Activated naive CD4-positive, alpha-beta T cell treated with anti-CD3 and anti-CD28 coated beads for 36 hours (primary cell): ENCODE measurements at regions of chr19 and their contacts with region 1.

Region 1: GRCh38 chr19:14786421-14786851 is 8.1 kb upstream of the ADGRE2 start:
- DNase-seq: peak; percentile 32
- H3K4me3 Mint-ChIP-seq: no peak overlapping the region
- H3K27ac Mint-ChIP-seq: no peak overlapping the region
- H3K4me1 Mint-ChIP-seq: peaks cover 15% of the 10 kb centered on the region
- H3K27me3 Mint-ChIP-seq: peaks cover 15% of the 10 kb centered on the region

Region 2: GRCh38 chr19:14775869-14776586 is 10.4 kb before region 1 on chr19:
- CTCF ChIA-PET with region 1: interaction called, 12 read pairs
- intact Hi-C with region 1: no loop called
- DNase-seq: no peak
- H3K4me3 Mint-ChIP-seq: no peak overlapping the region
- H3K27ac Mint-ChIP-seq: no peak overlapping the region
- H3K4me1 Mint-ChIP-seq: peaks cover 7% of the 10 kb centered on the region
- H3K27me3 Mint-ChIP-seq: peaks cover 26% of the 10 kb centered on the region

Region 3: GRCh38 chr19:14890643-14891379 is 104.4 kb after region 1 on chr19:
- CTCF ChIA-PET with region 1: interaction called, 3 read pairs
- intact Hi-C with region 1: loop called (anchors 2 kb)
- DNase-seq: no peak
- H3K4me3 Mint-ChIP-seq: no peak overlapping the region
- H3K27ac Mint-ChIP-seq: no peak overlapping the region
- H3K4me1 Mint-ChIP-seq: peaks cover 8% of the 10 kb centered on the region
- H3K27me3 Mint-ChIP-seq: peaks cover 31% of the 10 kb centered on the region

Region 4: DNA sequence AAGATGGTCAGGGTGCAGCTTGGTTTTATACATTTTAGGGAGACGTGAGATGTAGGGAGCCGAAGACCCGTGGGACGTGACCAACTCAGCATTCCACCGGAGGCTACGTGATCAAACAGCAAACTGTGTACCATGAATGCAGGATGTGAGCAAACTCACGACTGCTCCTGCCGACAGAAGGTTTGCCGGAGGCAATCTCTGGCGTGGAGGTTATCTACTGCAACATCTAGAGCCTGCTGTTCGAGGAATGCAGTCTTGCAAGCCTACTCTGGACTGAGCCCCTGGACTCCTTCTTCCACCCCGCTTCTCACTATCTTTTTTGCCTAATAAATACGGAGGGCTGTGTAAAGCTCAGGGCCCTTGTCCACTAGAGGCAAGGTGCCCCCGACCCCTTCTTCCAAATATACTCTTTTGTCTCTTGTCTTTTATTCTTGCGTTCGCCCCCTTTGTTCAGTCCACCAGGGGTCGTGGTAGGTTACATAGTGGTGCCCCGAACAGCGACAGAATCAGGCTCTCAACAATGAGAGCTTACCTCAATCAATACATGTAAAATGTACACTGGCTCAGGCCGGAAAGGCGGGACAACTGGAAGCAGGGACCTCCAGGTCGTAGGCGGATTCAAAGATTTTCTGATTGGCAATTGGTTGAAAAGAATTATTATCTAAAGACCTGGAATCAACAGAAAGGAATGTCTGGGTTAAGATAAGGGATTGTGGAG is 286.7 kb after region 1 on chr19:
- CTCF ChIA-PET with region 1: no interaction called
- intact Hi-C with region 1: no loop called
- DNase-seq: no peak
- H3K4me3 Mint-ChIP-seq: no peak overlapping the region
- H3K27ac Mint-ChIP-seq: no peak overlapping the region
- H3K4me1 Mint-ChIP-seq: no peaks in the 10 kb centered on the region
- H3K27me3 Mint-ChIP-seq: peaks cover 4% of the 10 kb centered on the region

Region 5: GRCh38 chr19:15374796-15375440 is 588.5 kb after region 1 on chr19:
- CTCF ChIA-PET with region 1: no interaction called
- intact Hi-C with region 1: no loop called
- DNase-seq: no peak
- H3K4me3 Mint-ChIP-seq: no peak overlapping the region
- H3K27ac Mint-ChIP-seq: no peak overlapping the region
- H3K4me1 Mint-ChIP-seq: peaks cover 37% of the 10 kb centered on the region
- H3K27me3 Mint-ChIP-seq: no peaks in the 10 kb centered on the region